ENCODE measurements at regions of chr5 and their contacts with region 1.

Region 1: DNA sequence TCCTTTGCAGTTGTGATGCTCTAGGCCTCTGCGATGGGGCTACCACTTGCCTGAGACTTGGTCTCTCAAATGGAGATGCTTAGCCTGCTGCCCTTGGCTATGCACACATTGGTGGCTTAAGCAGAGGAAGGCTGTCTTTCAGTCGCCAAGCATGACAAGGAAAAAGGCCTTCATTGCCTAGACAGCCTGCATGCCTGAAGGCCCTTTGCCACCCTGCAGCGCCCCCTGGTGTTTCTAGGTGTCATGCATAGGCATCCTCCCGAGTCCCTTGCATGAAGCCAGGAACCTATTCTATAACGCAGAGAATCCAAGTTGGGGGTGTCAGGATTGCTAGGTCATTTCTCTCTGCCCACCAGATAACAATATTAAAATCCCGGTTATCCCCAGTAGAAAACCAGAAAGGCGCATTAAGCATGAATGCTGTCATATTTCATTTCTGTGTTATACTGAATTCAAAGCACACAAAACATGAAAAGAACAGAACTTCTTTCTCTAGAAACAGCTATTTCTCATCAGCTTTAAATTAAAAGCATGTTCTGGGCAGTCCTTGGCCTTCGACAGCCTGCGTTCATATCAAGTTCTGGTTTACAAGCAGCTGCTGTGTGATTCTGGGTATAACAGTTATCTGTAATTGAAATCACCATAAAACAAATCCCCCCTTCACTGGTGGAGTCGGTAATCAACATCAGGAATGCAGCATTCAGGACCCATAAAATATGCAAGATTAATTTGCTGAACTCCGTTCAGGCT is 59.7 kb upstream of the TRPC7 start:
- DNase-seq: peak; percentile 31
- H3K4me3 ChIP-seq: no peak overlapping the region
- H3K27ac ChIP-seq: no peak overlapping the region
- H3K4me1 ChIP-seq: no peaks in the 10 kb centered on the region
- H3K27me3 ChIP-seq: no peaks in the 10 kb centered on the region
- CTCF ChIP-seq: peak; percentile 90 to 93

Region 2: GRCh38 chr5:136249678-136250266 is 175.2 kb before region 1 on chr5:
- CTCF ChIA-PET with region 1: no interaction called
- dilution Hi-C with region 1: no loop called
- in situ Hi-C with region 1: no loop called
- intact Hi-C with region 1: loop called (anchors 1 kb)
- DNase-seq: peak; percentile 37
- H3K4me3 ChIP-seq: no peak overlapping the region
- H3K27ac ChIP-seq: no peak overlapping the region
- H3K4me1 ChIP-seq: peaks cover 10% of the 10 kb centered on the region
- H3K27me3 ChIP-seq: no peaks in the 10 kb centered on the region
- CTCF ChIP-seq: peak; percentile 97 to 98

Region 3: DNA sequence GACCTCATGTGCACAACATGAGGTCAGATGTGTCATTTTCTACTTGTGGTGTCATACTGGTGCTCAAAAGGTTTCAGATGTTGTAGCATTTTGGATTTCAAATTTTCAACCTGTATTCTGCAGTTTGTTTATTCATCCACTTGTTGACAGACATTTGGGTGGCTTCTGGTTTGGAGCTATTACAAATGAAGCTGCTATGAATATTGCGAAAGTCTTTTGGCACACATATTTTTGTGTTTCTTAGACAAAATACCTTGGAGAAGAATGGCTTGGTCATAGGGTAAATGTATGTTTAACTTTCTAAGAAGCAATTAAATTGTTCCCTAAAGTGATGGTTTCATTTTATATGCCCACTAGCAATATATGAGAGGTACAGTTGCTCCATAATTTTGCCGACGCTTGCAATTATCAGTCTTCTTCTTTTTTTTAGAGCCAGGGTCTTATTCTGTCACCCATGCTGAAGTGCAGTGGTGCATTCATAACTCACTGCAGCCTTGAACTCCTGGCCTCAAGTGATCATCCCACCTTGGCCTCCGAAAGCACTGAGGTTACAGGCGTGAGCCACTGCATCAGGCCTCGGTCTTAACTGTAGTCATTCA is 11.0 kb after region 1 on chr5:
- CTCF ChIA-PET with region 1: interaction called, 10 read pairs
- dilution Hi-C with region 1: no loop called
- in situ Hi-C with region 1: no loop called
- intact Hi-C with region 1: no loop called
- DNase-seq: no peak
- H3K4me3 ChIP-seq: no peak overlapping the region
- H3K27ac ChIP-seq: no peak overlapping the region
- H3K4me1 ChIP-seq: no peaks in the 10 kb centered on the region
- H3K27me3 ChIP-seq: no peaks in the 10 kb centered on the region
- CTCF ChIP-seq: no peak

Region 4: GRCh38 chr5:136686192-136686872 is 261.3 kb after region 1 on chr5:
- CTCF ChIA-PET with region 1: no interaction called
- dilution Hi-C with region 1: no loop called
- in situ Hi-C with region 1: no loop called
- intact Hi-C with region 1: loop called (anchors 5 kb)
- DNase-seq: peak; percentile 56
- H3K4me3 ChIP-seq: no peak overlapping the region
- H3K27ac ChIP-seq: no peak overlapping the region
- H3K4me1 ChIP-seq: no peaks in the 10 kb centered on the region
- H3K27me3 ChIP-seq: no peaks in the 10 kb centered on the region
- CTCF ChIP-seq: peak; percentile 62 to 71

Region 5: GRCh38 chr5:136769900-136770684 is 345.1 kb after region 1 on chr5:
- CTCF ChIA-PET with region 1: no interaction called
- dilution Hi-C with region 1: no loop called
- in situ Hi-C with region 1: no loop called
- intact Hi-C with region 1: loop called (anchors 2 kb)
- DNase-seq: peak; percentile 45
- H3K4me3 ChIP-seq: no peak overlapping the region
- H3K27ac ChIP-seq: no peak overlapping the region
- H3K4me1 ChIP-seq: no peaks in the 10 kb centered on the region
- H3K27me3 ChIP-seq: peaks cover 2% of the 10 kb centered on the region
- CTCF ChIP-seq: peak; percentile 93 to 95